Breast epithelium (tissue), 4 donors: ENCODE measurements at regions of chr1 and their contacts with region 1.

Region 1: DNA sequence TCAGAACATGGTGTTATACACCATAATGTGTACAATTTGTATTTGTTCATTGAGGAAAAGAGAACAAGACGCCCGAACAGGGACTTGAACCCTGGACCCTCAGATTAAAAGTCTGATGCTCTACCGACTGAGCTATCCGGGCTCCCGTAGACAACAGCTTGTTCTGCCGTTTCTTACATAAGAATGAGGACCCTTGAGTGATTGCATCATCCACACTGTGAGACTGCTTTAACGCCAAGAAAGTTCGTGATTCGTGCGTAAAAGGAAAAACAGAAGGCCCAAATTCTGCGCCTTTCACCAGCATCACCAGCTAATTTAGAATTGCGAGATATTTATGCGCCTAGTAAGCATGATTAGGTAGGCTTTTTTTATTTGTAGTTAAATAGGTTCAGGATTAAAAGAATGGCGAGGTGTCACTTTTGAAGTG is 9.2 kb upstream of the MDM4 start:
- DNase-seq: peak; percentile 74 to 86
- H3K4me3 ChIP-seq: peak overlapping the region; percentile 50 to 66 (median 62)
- H3K27ac ChIP-seq: peak overlapping the region; percentile 85 to 91
- H3K4me1 ChIP-seq: no peaks in the 10 kb centered on the region
- H3K27me3 ChIP-seq: no peaks in the 10 kb centered on the region
- CTCF ChIP-seq: peak in 1 of 3 donors; percentile 23
- POLR2A ChIP-seq: no peak

Region 2: DNA sequence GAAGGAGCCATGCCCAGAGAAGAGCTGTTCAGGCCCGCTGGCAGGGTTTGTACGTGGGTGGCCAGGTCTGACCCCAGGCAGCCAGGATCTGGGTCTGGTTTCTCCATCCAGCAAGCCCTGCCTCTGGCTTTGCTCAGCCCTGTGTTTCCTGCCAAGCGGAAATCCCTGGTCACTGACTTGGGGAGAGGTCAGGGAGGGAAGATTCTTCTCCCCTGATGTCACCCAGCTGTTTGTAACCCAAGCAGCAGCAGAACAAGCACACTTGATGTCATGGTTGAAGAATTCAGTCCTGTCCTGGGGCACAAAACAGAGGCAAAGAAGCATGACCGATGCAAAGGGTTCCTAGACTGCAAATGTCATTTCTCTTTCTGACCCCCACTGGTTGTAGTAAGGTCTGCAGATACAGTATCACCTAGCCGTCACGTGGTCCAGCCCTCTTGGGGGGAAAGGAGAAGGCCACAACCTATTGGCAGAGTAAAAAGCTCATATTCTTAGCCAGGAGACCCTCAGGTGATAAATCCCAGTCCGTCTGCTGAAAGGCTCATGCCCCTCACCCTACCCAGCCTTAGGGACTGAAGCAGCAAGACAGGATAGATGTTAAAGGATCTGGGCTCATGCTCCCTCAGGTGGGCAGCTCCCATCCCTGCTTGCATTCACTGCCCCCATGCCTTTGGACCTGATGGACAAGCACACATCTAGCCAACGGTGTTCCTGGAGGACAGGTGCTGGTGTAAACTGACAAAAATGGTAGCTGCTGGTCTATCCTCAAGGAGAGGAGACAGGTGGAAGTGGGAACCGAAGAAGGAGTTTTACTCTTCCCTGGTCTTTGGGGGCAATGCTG is 1917.6 kb before region 1 on chr1:
- intact Hi-C with region 1: loop called (anchors 10 kb)
- DNase-seq: peak; percentile 82 to 96
- H3K4me3 ChIP-seq: peak overlapping the region in 1 of 3 donors; percentile 23
- H3K27ac ChIP-seq: peak overlapping the region; percentile 95
- H3K4me1 ChIP-seq: peaks cover 11% of the 10 kb centered on the region in 2 donors
- H3K27me3 ChIP-seq: no peaks in the 10 kb centered on the region
- CTCF ChIP-seq: peak in 2 of 3 donors; percentile 33 to 45
- POLR2A ChIP-seq: no peak